ENCODE measurements at regions of chr3 and their contacts with region 1.

Region 1: GRCh38 chr3:64739971-64740631 is 52.3 kb upstream of the ADAMTS9 start:
- DNase-seq: no peak
- ATAC-seq: peak in 3 of 4 donors; percentile 30 to 73 (median 33)
- H3K4me3 ChIP-seq: no peak overlapping the region
- H3K27ac ChIP-seq: peak overlapping the region in 1 of 12 donors; percentile 51
- H3K4me1 ChIP-seq: peaks cover 0 to 3% (median 0%) of the 10 kb centered on the region in 12 donors
- H3K27me3 ChIP-seq: no peaks in the 10 kb centered on the region
- CTCF ChIP-seq: no peak
- POLR2A ChIP-seq: no peak

Region 2: DNA sequence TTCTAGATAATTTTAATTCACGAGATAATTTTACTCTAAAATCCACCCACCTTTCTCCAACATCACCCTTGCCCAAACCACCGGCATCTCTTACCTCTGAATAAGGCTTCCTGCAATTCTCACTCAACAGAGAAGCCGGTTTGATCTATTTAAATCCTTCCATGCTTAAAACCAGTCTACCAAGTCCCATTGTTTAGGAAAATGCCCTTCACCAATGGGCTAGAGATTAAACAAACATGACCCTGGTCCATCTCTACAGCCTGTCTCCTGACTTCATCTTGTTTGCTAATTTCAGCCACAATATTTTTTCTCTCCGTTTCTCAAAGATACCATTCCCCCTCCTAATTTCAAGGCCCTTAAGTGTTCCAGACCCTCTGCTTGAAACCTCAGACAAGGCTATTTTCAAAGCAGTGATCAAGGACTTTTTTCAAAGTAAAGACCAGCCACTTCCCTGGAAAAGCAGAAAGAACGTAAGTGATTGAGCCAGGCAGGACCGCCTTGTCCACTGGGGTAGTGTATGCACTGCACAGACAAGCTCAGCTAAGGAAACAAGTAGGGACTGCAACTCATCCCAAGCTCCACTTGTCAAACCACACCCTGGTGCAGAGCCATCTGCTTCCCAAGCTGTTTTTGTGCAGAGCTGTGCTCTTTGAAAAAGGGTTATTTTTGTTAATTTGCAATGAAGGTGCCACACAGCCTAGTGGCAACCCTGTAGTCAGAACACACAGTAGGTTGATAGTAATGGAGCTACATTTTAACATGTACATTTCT is 245.8 kb before region 1 on chr3:
- intact Hi-C with region 1: no loop called
- DNase-seq: no peak
- ATAC-seq: no peak
- H3K4me3 ChIP-seq: no peak overlapping the region
- H3K27ac ChIP-seq: no peak overlapping the region
- H3K4me1 ChIP-seq: peaks cover 0 to 3% (median 0%) of the 10 kb centered on the region in 12 donors
- H3K27me3 ChIP-seq: peaks cover 0 to 29% (median 0%) of the 10 kb centered on the region in 9 donors
- CTCF ChIP-seq: no peak
- POLR2A ChIP-seq: no peak

Region 3: GRCh38 chr3:64815195-64815631 is 75.1 kb after region 1 on chr3:
- intact Hi-C with region 1: loop called in 1 of 10 experiments (anchors 5 kb)
- DNase-seq: peak in 3 of 5 donors; percentile 21 to 30 (median 23)
- ATAC-seq: peak; percentile 79 to 86 (median 82)
- H3K4me3 ChIP-seq: no peak overlapping the region
- H3K27ac ChIP-seq: peak overlapping the region; percentile 6 to 65 (median 43)
- H3K4me1 ChIP-seq: peaks cover 5 to 42% (median 22%) of the 10 kb centered on the region in 12 donors
- H3K27me3 ChIP-seq: no peaks in the 10 kb centered on the region
- CTCF ChIP-seq: peak in 1 of 12 donors; percentile 15
- POLR2A ChIP-seq: no peak

Region 4: GRCh38 chr3:65524584-65524983 is 784.5 kb after region 1 on chr3:
- intact Hi-C with region 1: no loop called
- DNase-seq: no peak
- ATAC-seq: peak in 3 of 4 donors; percentile 18 to 35 (median 22)
- H3K4me3 ChIP-seq: no peak overlapping the region
- H3K27ac ChIP-seq: no peak overlapping the region
- H3K4me1 ChIP-seq: peaks cover 0 to 34% (median 10%) of the 10 kb centered on the region in 12 donors
- H3K27me3 ChIP-seq: no peaks in the 10 kb centered on the region
- CTCF ChIP-seq: no peak
- POLR2A ChIP-seq: no peak

Measured in heart left ventricle (tissue), 16 donors.